ENCODE measurements at regions of chr13 and their contacts with region 1.

Region 1: GRCh38 chr13:51803422-51804294 is at the start of gene DHRS12:
- DNase-seq: peak; percentile 90
- ATAC-seq: peak; percentile 77
- H3K4me3 Mint-ChIP-seq: peak within 1 kb of the TSS; percentile 87
- H3K27ac Mint-ChIP-seq: peak within 1 kb of the TSS; percentile 99
- H3K4me1 Mint-ChIP-seq: peaks cover 50% of the 10 kb centered on the region
- H3K27me3 Mint-ChIP-seq: no peaks in the 10 kb centered on the region
- total RNA-seq, gene DHRS12: 4.9 to 5.3 TPM

Region 2: DNA sequence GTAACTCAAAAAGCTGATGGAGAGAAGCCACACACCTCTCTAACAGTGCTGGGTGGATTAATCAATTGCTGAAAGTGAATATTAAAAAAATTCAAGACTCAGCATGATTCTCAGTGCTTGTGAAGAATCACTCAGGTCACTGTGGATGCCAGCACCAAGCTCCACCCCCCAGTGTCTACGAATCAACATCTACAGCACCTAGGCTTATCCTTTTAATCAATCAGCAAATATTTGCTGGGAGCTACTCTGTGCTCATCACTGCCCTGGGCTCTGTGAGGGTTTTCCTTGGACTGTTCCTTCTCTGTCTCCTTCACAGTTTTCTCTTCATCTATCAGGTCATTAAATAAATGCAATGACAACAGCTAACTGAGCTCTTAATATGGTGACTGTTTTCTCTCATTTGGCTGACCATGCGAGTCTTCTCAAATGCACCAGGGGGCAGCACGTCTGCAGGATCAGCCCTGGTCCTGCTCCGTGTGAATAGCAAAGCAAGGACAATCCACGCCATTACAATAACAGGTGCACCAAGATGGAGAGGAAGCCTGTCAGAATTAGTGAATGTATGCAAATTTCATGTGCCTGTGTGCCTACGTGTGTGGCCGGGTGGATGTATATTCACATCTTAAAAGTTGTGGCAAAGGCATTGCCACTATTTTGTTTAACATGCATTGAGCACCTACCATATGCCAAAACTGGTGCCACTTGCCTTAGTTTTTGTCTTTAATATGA is 678.0 kb before region 1 on chr13:
- CTCF ChIA-PET with region 1: interaction called, 5 read pairs
- POLR2A ChIA-PET with region 1: no interaction called
- intact Hi-C with region 1: loop called (anchors 2 to 10 kb)
- DNase-seq: peak; percentile 74
- ATAC-seq: peak; percentile 82
- H3K4me3 Mint-ChIP-seq: no peak overlapping the region
- H3K27ac Mint-ChIP-seq: no peak overlapping the region
- H3K4me1 Mint-ChIP-seq: peaks cover 11% of the 10 kb centered on the region
- H3K27me3 Mint-ChIP-seq: peaks cover 15% of the 10 kb centered on the region

Region 3: DNA sequence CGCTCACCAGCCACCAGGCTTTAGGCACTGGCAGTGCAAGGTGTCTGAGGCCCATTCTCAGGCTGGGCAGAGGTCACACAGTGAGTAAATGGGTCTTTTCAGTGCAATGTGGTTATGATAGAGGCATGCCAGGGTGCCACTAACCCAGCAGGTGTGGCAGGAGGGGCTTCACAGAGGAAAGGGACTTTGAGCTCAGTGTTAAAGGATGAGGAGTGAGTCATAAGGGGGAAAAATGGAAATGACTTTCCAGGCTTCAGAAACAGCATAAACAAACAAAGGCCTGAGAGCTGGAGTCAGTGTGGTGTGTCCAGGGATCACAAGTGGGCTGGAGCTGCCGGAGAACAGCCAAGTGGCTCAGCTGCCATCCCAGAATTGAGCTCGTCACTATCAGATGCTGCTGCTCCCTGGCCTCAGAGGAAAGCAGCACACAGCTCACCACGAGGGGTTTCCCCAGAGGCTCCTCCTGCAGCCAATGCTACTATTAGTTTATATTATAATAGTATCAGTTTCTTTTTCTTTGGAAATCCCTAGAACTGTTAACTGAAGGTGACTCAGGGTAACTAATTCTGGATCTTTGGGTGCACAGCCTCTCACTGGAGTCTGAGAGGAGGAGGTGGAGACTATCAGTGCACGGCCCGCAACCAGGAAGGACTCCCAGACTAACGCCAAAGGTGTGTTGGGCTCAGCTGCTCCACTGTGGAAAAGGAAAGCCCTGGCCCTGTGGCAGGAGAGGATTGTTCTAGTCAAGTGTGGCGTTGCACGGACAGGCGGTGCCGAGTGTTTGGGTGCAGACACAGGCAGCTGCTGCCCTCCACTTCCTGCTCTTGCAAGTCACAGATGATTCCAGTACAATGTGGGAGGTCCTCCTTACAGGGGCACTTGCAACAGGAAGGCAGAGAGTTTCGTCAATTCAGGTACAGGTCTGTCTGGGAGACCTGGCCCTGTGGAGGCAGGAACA is 39.2 kb before region 1 on chr13:
- CTCF ChIA-PET with region 1: interaction called, 5 read pairs
- POLR2A ChIA-PET with region 1: no interaction called
- intact Hi-C with region 1: loop called in 1 of 2 experiments (anchors 2 kb)
- DNase-seq: peak; percentile 83
- ATAC-seq: peak; percentile 91
- H3K4me3 Mint-ChIP-seq: peak overlapping the region; percentile 74
- H3K27ac Mint-ChIP-seq: peak overlapping the region; percentile 97
- H3K4me1 Mint-ChIP-seq: peaks cover 45% of the 10 kb centered on the region
- H3K27me3 Mint-ChIP-seq: no peaks in the 10 kb centered on the region

Region 4: GRCh38 chr13:51832471-51833152 is 29.0 kb after region 1 on chr13:
- CTCF ChIA-PET with region 1: interaction called, 154 read pairs
- POLR2A ChIA-PET with region 1: no interaction called
- intact Hi-C with region 1: no loop called
- DNase-seq: peak; percentile 75
- ATAC-seq: peak; percentile 98
- H3K4me3 Mint-ChIP-seq: no peak overlapping the region
- H3K27ac Mint-ChIP-seq: peak overlapping the region; percentile 51
- H3K4me1 Mint-ChIP-seq: peaks cover 49% of the 10 kb centered on the region
- H3K27me3 Mint-ChIP-seq: no peaks in the 10 kb centered on the region

Region 5: DNA sequence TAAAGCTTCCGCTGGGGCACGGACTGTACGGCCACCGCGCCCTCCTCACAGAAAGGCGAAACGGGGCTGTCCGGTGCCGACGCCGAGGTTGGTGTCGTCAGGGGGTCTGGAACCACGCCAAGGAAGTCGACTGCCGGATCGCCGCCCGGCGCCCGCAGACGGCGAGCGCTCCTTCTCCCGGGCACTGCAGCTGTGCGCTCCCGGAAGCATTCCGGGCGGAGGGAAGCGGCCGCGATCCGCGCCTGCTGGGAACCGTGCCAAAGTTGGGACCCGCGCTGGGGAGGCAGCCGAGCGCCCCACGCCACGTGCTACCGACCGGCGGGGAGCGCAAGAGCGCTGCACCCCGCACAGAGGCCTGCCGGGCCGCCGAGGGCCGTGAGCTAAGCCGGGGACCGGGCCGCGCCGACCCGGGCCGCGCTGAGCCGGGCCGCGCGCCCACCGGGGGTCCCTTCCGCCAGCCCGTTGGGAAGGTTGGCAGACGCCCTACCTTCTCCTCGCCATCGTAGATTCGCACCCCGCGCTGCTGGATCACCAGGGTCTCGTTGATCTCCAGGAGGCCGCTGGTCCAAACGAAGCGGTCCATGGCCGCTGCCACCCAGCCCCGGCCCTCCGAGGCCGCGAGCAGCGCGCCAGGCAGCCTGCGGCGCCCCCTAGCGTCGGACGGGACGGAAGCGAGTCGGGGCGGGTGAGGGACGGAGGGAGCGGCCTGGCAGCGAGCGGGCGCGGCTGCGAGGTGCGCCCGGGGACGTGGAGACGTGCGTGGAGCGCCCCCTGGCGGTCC is 646.5 kb after region 1 on chr13 and contains the start of gene VPS36:
- CTCF ChIA-PET with region 1: no interaction called
- POLR2A ChIA-PET with region 1: no interaction called
- intact Hi-C with region 1: loop called in 1 of 2 experiments (anchors 2 kb)
- DNase-seq: peak; percentile 96
- ATAC-seq: peak; percentile 77
- H3K4me3 Mint-ChIP-seq: peak within 1 kb of the TSS; percentile 88
- H3K27ac Mint-ChIP-seq: peak within 1 kb of the TSS; percentile 91
- H3K4me1 Mint-ChIP-seq: peaks cover 35% of the 10 kb centered on the region
- H3K27me3 Mint-ChIP-seq: peaks cover under 1% of the 10 kb centered on the region
- total RNA-seq, gene VPS36: 27.4 to 29.8 TPM